BJ (cell line): ENCODE measurements at regions of chr17 and their contacts with region 1.

Region 1: GRCh38 chr17:41548844-41549595 is 20.9 kb upstream of the KRT19 start:
- DNase-seq: no peak
- H3K4me3 ChIP-seq: no peak overlapping the region
- H3K27me3 ChIP-seq: no peaks in the 10 kb centered on the region
- CTCF ChIP-seq: peak; percentile 86

Region 2: GRCh38 chr17:40417609-40418427 is 1131.2 kb before region 1 on chr17 and contains the start of gene TOP2A:
- CTCF ChIA-PET with region 1: no interaction called
- POLR2A ChIA-PET with region 1: interaction called, 11 read pairs
- DNase-seq: peak; percentile 99
- H3K4me3 ChIP-seq: peak within 1 kb of the TSS; percentile 56
- H3K27me3 ChIP-seq: no peaks in the 10 kb centered on the region
- CTCF ChIP-seq: no peak
- polyA plus RNA-seq, gene TOP2A: 31.8 and 69.6 TPM in 2 replicates

Region 3: DNA sequence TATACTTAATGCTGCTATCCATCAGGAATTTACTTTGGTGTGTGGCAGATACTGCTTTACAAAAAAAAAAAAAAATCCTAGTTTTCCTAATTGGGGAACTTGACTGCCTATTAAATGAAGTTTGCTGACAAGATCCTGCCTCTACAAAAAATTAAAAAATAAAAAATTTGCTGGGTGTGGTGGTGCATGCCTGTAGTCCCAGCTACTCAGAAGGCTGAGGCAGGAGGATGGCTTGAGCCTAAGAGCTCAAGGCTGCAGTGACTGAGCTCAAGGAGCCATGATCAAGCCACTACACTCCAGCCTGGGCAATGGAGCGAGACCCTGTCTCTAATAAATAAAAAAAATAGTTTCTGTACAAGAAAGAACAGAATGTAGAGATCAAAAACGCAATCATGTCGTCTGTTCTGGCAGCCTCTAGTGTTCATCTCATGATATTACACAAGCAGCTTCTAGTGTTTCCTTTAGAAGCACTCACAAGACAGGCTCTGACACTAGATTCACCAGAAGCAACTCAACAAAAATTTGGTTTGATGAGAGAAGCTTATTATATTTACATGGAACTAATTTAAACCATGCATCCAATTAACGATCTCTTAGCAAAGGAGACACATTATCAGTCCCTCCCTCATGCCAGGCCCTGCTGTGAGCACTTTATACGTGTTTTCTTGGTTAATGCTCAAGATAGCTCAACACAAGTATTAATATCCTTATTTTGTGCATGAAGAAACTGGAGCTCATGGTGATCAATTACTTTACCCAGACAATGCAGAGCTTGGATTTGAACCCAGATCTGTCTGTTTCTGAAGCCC is 226.7 kb before region 1 on chr17:
- CTCF ChIA-PET with region 1: interaction called, 10 read pairs
- POLR2A ChIA-PET with region 1: no interaction called
- DNase-seq: peak; percentile 38
- H3K4me3 ChIP-seq: no peak overlapping the region
- H3K27me3 ChIP-seq: no peaks in the 10 kb centered on the region
- CTCF ChIP-seq: peak; percentile 91

Region 4: DNA sequence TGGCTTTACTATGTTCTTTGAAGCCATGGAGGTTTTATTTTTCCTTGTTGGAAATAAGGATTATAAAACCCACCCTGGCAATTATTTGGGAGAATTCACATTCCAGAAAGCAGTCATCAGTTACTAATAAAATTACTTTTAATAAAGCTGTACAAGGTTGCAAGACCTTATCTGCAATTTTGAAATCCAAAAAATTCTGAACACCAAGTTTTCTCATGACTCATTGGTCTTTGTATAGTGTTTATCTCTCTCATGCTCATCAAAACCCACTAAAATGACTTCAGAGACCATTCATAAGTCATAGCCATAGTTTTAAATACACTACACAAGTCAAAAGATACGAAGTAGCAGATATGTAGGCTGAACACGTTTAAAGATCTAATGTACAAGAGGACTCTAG is 102.2 kb before region 1 on chr17:
- CTCF ChIA-PET with region 1: interaction called, 12 read pairs
- POLR2A ChIA-PET with region 1: no interaction called
- DNase-seq: peak; percentile 77
- H3K4me3 ChIP-seq: no peak overlapping the region
- H3K27me3 ChIP-seq: no peaks in the 10 kb centered on the region
- CTCF ChIP-seq: no peak

Region 5: DNA sequence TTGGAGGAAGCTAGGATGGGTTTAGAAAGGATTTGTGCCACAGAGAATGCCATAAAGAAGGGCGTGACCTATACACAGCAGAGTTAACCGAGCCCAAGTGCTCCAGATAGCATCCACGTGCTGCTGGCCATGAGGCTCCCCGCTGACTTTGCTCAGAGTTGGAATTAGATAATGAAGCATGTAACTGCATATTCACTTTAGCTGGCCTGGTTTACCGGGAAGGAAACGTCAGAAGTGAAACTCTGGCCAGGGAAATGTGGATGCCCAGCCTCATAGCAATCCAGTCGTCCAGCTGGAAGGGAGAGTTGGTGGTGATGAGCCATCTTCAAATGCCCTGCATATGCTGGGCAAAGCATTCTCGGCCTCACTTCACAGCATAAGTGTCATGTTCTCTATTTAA is 74.2 kb before region 1 on chr17:
- CTCF ChIA-PET with region 1: no interaction called
- POLR2A ChIA-PET with region 1: no interaction called
- DNase-seq: no peak
- H3K4me3 ChIP-seq: no peak overlapping the region
- H3K27me3 ChIP-seq: no peaks in the 10 kb centered on the region
- CTCF ChIP-seq: no peak

Region 6: DNA sequence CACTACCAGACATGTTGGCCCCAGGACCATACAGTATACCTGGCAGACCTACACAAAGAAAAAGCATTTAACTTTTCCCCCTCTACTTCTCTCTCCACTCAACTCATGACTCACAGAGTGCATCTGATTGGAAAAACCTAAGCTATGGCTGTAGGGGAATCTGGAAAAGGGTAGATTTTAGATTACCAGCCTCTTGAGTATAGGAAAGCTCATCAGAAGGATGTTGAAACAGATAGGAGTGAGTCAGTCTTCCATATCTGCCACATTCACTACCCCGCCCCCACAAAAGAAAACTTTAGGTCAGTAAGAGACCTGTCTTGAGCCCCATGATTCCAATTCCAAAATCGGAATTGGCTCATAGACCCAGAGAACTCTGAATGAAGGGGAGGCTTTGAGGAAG is 10.5 kb after region 1 on chr17:
- CTCF ChIA-PET with region 1: interaction called, 31 read pairs
- POLR2A ChIA-PET with region 1: no interaction called
- DNase-seq: no peak
- H3K4me3 ChIP-seq: no peak overlapping the region
- H3K27me3 ChIP-seq: peaks cover 7% of the 10 kb centered on the region
- CTCF ChIP-seq: no peak

Region 7: DNA sequence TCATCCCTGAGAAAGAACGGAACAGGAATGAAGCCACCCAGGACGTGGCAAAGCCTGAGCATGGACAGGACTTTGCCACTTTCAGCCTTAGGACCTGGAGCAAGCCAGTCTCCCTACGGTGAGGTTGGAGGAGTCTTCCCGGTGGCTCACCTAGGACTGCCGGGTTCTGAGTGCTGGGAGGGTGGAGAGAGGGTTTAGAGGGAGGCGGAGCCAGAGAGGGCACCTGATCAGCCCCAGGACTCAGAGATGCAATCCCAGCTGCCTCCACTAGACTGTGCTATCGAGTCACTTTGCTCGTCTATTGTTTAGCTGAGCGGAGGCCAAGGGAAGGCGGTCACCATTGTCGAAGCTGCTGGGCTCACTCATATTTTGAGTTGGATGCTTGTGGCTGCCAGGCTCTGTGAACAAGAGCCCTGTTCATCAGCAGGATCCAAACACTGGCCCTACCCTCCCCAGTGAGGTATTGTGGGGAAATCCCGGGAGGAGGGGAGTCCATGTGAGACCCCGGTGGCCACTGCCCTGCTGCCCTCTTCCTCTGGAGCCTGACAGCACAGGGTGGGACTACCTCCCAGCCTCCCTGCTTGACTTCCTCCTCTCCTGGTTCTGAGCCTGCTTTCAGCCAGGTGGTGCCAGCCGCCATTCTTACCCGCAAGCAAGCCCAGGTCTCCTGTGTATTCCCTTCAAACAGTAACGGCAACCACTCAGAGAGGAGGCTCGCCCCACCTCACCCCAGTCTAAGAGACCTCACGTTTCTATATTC is 30.6 kb after region 1 on chr17:
- CTCF ChIA-PET with region 1: interaction called, 22 read pairs
- POLR2A ChIA-PET with region 1: no interaction called
- DNase-seq: peak; percentile 8
- H3K4me3 ChIP-seq: no peak overlapping the region
- H3K27me3 ChIP-seq: peaks cover 4% of the 10 kb centered on the region
- CTCF ChIP-seq: peak; percentile 87